SK-N-SH (cell line): ENCODE measurements at regions of chr15 and their contacts with region 1.

Region 1: GRCh38 chr15:33729653-33730052 is 238.6 kb upstream of the CHRM5 start:
- DNase-seq: peak; percentile 14
- H3K4me3 ChIP-seq: no peak overlapping the region
- H3K27ac ChIP-seq: no peak overlapping the region
- H3K4me1 ChIP-seq: no peaks in the 10 kb centered on the region; a peak in 1 of 4 replicates
- H3K27me3 ChIP-seq: no peaks in the 10 kb centered on the region
- CTCF ChIP-seq: peak; percentile 48
- EP300 ChIP-seq: no peak
- RAD21 ChIP-seq: peak; percentile 53

Region 2: DNA sequence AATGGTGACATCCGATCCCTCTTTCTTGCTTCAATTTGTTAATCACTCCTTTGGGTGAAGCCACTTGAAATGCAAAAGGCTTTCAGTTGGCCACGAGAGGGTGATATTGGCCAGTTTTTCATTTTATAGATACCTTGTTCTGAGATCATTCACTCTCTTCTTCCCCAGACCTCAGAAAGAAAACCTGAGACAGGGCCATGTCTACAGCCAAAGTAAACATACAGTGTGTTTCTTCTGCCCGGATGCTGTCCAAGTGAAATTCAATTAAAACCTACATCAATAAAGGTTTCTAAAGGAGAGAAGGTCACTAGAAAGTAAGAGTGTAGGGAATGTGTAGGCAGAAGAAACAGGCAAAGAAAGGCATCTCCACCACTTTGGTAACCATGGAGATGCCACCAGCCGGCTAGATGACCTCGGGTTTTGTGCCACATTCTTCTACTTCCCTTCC is 495.6 kb before region 1 on chr15:
- CTCF ChIA-PET with region 1: interaction called, 20 read pairs
- POLR2A ChIA-PET with region 1: no interaction called
- DNase-seq: peak; percentile 43
- H3K4me3 ChIP-seq: no peak overlapping the region
- H3K27ac ChIP-seq: peak overlapping the region in 1 of 2 experiments; percentile 8; a peak in 1 of 4 replicates
- H3K4me1 ChIP-seq: no peaks in the 10 kb centered on the region; a peak in 1 of 4 replicates
- H3K27me3 ChIP-seq: no peaks in the 10 kb centered on the region
- CTCF ChIP-seq: peak; percentile 87
- EP300 ChIP-seq: no peak
- RAD21 ChIP-seq: peak; percentile 84

Region 3: DNA sequence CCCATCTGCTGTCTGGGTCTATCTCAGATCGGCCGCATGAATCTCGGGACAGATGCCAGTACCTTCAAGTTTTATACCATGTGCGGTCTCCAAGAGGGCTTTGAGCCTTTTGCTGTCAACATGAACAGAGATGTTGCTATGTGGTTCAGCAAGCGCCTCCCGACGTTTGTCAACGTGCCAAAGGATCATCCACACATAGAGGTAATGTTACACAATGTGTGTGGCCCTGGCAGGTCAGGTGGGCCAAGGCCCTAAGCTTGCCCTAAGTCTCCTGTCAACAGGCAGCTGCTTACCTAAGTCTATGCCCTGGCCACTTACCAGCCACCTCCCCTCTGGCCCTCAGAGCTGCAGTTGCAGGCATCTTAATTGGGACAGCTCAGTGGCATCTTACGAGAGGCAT is 85.3 kb before region 1 on chr15:
- CTCF ChIA-PET with region 1: no interaction called
- POLR2A ChIA-PET with region 1: no interaction called
- DNase-seq: no peak
- H3K4me3 ChIP-seq: no peak overlapping the region
- H3K27ac ChIP-seq: no peak overlapping the region
- H3K4me1 ChIP-seq: peaks cover 0 to 19% of the 10 kb centered on the region in 2 experiments; a peak in 2 of 4 replicates
- H3K27me3 ChIP-seq: peaks cover 9% of the 10 kb centered on the region; the same call in 1 of the 2 replicates
- CTCF ChIP-seq: no peak
- EP300 ChIP-seq: no peak
- RAD21 ChIP-seq: no peak